ENCODE measurements at regions of chr12 and their contacts with region 1.

Region 1: GRCh38 chr12:57124259-57124877 is 3.9 kb upstream of the LRP1 start:
- DNase-seq: peak; percentile 37 to 89 (median 64)
- ATAC-seq: peak; percentile 44 to 59 (median 57)
- H3K4me3 ChIP-seq: no peak overlapping the region
- H3K4me3 Mint-ChIP-seq: no peak overlapping the region
- H3K27ac ChIP-seq: no peak overlapping the region
- H3K27ac Mint-ChIP-seq: peak overlapping the region in 1 of 2 donors; percentile 3
- H3K4me1 ChIP-seq: peaks cover 3 to 22% of the 10 kb centered on the region in 2 experiments
- H3K4me1 Mint-ChIP-seq: peaks cover 8 to 14% (median 10%) of the 10 kb centered on the region in 3 donors
- H3K27me3 ChIP-seq: peaks cover 2 to 21% of the 10 kb centered on the region in 2 experiments
- H3K27me3 Mint-ChIP-seq: peaks cover 0 to 3% of the 10 kb centered on the region in 2 donors

Region 2: DNA sequence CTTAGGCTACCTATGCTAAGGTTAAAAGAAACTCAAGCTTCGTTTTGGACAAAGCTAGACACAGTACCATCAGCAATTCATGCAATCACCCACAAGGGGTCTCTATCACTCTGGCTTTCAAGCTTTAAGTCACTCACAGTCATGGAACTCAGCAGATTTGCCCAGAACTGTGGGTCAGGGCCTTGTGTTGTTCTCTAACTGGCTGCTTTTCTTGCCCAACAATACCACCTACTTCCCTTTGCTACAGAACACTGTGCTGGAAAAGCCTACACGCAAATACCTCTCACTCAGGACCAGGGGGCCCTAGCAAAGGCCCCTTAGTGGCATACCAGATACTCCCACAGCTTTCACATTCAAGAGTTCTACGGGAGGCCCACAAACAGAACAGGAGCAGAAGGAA is 54.8 kb before region 1 on chr12:
- CTCF ChIA-PET with region 1: interaction called, 6 to 17 read pairs
- POLR2A ChIA-PET with region 1: no interaction called
- DNase-seq: peak in 30 of 35 experiments; percentile 30 to 88 (median 55)
- ATAC-seq: peak; percentile 98 to 100 (median 99)
- H3K4me3 ChIP-seq: no peak overlapping the region
- H3K4me3 Mint-ChIP-seq: peak overlapping the region in 1 of 3 donors; percentile 6
- H3K27ac ChIP-seq: peak overlapping the region; percentile 54
- H3K27ac Mint-ChIP-seq: peak overlapping the region; percentile 85 to 92
- H3K4me1 ChIP-seq: peaks cover 5 to 12% of the 10 kb centered on the region in 2 experiments
- H3K4me1 Mint-ChIP-seq: peaks cover 17 to 31% (median 26%) of the 10 kb centered on the region in 3 donors
- H3K27me3 ChIP-seq: no peaks in the 10 kb centered on the region
- H3K27me3 Mint-ChIP-seq: no peaks in the 10 kb centered on the region

Region 3: DNA sequence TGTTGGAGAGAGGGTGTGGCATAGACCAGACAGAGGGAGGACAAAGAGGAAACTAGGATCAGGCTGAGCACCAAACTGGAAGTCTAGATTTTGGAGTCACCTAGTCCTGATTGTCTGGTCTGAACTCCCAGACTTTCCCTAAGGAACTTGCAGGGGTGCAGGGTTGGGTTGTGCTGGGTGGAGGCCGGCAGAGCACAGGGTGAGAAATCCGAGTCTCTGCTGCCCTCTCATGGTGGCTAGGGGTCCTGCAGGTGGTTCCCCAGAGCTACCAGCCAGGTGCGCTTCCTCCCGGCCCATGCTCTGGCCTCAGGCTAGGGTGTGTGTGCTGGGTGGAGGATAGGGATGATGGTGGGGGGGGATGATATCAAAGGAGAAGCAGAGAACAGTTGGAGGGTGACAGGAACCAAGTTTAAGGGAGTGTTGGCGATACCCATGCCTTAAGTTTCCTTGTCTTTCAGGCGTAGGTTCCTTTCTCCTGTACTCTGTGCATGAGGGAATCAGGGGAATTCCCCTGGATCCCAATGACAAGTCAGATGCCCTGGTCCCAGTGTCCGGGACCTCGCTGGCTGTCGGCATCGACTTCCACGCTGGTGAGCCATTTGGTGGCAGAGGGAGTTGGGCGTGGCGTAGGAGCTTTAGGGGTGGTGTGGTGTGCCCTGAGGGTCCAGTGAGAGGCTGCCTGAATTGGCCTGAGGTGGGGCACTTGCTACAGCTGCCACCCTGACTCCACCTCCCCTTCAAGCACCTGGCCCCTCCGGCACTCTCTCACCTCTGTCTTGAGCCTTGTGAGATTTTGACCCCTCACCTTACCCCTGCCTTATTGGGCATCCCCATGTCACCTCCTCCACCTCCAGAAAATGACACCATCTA is 58.8 kb after region 1 on chr12:
- CTCF ChIA-PET with region 1: interaction called, 3 to 13 read pairs
- POLR2A ChIA-PET with region 1: no interaction called
- DNase-seq: peak; percentile 47 to 87 (median 74)
- ATAC-seq: peak; percentile 96 to 99 (median 98)
- H3K4me3 ChIP-seq: no peak overlapping the region
- H3K4me3 Mint-ChIP-seq: no peak overlapping the region
- H3K27ac ChIP-seq: no peak overlapping the region
- H3K27ac Mint-ChIP-seq: no peak overlapping the region
- H3K4me1 ChIP-seq: peaks cover 0 to 6% of the 10 kb centered on the region in 2 experiments
- H3K4me1 Mint-ChIP-seq: peaks cover 0 to 4% (median 2%) of the 10 kb centered on the region in 3 donors
- H3K27me3 ChIP-seq: peaks cover 0 to 3% of the 10 kb centered on the region in 2 experiments
- H3K27me3 Mint-ChIP-seq: no peaks in the 10 kb centered on the region

Measured in T-cell (primary cell).